Activated CD4-positive, alpha-beta memory T cell treated with anti-CD3 and anti-CD28 coated beads for 36 hours (primary cell): ENCODE measurements at regions of chr1 and their contacts with region 1.

Region 1: DNA sequence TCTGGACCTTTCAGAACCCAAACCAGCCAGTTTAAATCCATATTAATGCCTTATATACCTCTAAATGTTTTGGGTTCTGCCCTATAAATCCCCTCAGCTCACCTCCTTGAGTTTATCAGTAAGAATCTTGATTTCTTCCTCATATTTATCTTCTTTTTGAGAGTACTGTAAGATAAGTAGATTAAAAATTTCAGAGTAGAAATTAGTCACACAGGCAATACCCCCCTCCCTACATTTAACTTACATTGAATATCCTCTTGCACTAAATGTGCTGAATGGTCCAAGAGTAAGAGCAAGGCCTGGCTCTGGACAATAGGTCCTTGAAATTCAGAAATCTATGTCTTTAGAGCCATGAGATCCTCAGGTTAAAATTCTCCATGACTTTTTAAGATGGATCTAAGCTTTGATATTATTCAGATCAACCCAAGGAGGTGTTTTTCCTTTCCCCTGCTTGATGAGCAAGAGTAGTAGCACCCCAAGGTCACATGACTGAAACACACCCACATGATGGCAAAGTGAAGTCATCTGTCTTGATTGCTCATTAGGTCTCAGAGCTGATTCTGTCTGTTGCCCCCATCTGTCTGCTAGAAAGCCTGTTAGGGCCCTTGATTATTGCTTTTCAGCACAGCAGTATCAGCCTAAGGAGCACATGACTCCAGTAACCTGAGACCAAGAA is 15.8 kb upstream of the NUP210L start:
- DNase-seq: peak; percentile 81
- H3K4me3 Mint-ChIP-seq: peak overlapping the region; percentile 8
- H3K27ac Mint-ChIP-seq: peak overlapping the region; percentile 78
- H3K4me1 Mint-ChIP-seq: peaks cover 55% of the 10 kb centered on the region
- H3K27me3 Mint-ChIP-seq: no peaks in the 10 kb centered on the region

Region 2: GRCh38 chr1:154104433-154105082 is 66.1 kb before region 1 on chr1:
- CTCF ChIA-PET with region 1: no interaction called
- POLR2A ChIA-PET with region 1: no interaction called
- intact Hi-C with region 1: no loop called
- DNase-seq: no peak
- H3K4me3 Mint-ChIP-seq: no peak overlapping the region
- H3K27ac Mint-ChIP-seq: no peak overlapping the region
- H3K4me1 Mint-ChIP-seq: no peaks in the 10 kb centered on the region
- H3K27me3 Mint-ChIP-seq: no peaks in the 10 kb centered on the region

Region 3: DNA sequence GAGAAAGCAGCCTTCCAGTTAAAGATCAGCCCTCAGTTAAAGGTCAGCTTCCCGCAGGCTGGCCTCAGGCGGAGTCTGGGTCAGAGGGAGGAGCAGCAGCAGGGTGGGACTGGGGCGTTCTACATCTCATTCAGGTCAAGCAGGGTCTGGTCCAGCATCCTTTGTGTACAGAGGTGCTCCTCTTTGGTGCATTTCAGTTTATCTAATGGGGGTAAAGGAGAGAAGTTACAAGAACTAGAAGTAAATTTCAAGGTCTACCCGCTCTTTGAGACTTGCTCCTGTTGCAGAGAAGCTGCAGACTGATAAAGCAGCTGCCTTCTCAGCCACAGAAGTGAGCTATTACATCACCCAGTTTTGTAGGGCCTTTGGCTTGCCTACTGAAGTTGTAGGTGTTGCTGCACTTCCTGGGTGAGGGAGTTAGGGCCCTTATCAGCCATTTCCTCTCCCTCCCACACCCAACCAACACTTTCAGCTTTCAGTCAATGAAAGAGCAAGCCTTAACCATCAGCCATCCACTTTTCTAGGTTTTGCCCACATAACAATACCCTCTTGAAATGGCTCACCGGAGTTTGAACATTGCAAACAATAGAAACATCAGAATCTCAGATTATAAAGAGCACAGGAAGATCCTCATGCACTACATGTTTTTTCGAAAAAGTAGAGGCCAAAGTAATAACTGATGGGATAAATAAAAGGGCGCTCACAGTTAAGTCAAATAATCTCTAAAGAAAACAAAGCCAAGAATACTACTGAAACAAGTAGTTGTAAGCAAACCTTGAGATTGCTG is 13.0 kb before region 1 on chr1:
- CTCF ChIA-PET with region 1: interaction called, 9 read pairs
- POLR2A ChIA-PET with region 1: interaction called, 21 read pairs
- intact Hi-C with region 1: loop called (anchors 1 kb)
- DNase-seq: peak; percentile 83
- H3K4me3 Mint-ChIP-seq: peak overlapping the region; percentile 47
- H3K27ac Mint-ChIP-seq: peak overlapping the region; percentile 85
- H3K4me1 Mint-ChIP-seq: peaks cover 69% of the 10 kb centered on the region
- H3K27me3 Mint-ChIP-seq: no peaks in the 10 kb centered on the region

Region 4: DNA sequence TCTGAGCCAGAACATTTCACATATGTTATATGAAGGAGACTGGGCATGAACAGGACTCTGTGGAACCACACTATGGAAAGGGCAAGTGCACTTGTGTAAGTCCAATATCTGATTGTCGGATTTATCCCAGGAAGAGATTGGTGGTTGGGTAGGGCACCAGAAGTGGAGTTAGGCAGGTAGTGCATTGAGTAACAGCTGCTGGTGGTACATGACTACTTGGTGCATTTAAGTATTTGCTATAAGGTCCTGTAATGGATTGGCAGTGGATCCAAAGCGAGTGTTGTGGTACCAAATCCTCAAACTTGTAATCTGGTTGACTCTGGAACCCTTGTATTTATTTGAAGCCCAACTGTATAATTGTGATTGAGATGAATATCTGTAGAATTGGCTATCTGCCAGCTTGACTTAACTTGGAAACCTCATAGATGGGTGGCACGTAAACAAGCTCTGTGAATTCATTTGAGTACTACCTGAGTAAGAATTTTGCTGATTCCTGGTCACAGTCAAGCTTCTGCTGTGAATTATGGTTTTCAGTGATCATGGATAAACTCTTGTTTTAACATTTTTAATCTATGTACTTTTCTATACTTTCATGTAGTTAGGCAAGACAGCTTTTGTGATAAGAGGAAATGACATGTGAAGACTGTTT is 71.1 kb after region 1 on chr1:
- CTCF ChIA-PET with region 1: no interaction called
- POLR2A ChIA-PET with region 1: no interaction called
- intact Hi-C with region 1: no loop called
- DNase-seq: no peak
- H3K4me3 Mint-ChIP-seq: no peak overlapping the region
- H3K27ac Mint-ChIP-seq: peak overlapping the region; percentile 86
- H3K4me1 Mint-ChIP-seq: peaks cover 28% of the 10 kb centered on the region
- H3K27me3 Mint-ChIP-seq: no peaks in the 10 kb centered on the region